Right ventricle myocardium inferior (tissue), 1 donor: ENCODE measurements at regions of chr3 and their contacts with region 1.

Region 1: GRCh38 chr3:197942956-197943556 is 6.9 kb upstream of the RPL35A start:
- DNase-seq: no peak
- ATAC-seq: no peak

Region 2: DNA sequence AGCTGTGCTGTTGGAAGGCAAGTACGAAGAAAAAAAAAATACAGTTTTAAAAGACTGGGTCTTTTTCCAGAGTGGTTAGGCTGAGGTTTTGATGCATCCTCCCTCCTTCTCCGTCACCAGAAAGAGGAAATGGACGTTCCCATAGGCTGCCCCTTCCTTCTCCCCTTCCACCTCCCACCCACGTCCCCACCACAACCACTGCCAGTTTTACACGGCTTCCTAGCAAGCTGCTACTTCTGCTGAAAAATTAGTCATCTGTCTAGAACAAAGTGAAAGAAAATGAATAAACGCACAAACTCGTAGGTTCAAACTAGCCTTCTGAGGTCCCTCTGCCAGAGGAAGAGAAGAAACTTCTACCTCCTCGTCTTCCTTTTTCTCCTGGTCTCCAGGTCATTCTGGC is 64.6 kb before region 1 on chr3:
- intact Hi-C with region 1: no loop called
- DNase-seq: no peak
- ATAC-seq: no peak

Region 3: GRCh38 chr3:197906023-197906849 is 36.8 kb before region 1 on chr3:
- intact Hi-C with region 1: loop called (anchors 2 kb)
- DNase-seq: peak; percentile 92
- ATAC-seq: peak; percentile 96

Region 4: GRCh38 chr3:197926418-197926817 is 16.6 kb before region 1 on chr3:
- intact Hi-C with region 1: no loop called
- DNase-seq: no peak
- ATAC-seq: no peak